Mucosa of descending colon (tissue), 3 donors: ENCODE measurements at regions of chr18 and their contacts with region 1.

Region 1: DNA sequence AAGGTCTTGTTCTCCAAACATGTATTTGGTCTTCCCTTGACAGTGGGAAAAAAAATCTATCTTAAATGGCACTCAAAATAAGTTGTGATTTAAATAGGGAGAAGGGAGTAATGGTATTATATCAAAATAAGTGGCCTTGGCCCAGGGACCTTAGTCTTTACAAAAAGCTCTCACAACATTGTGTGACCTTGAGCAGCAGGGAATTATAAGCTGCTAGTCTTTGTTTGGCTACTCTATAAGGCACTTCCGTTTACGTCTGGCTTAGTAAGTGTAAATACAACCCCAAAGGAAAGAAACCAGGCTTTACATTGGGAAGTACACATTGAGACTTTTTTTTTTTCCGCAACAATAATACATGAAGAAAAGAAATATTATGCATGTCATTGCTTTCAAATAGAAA is 734.0 kb upstream of the LINC00305 start:
- DNase-seq: no peak
- ATAC-seq: no peak
- H3K4me3 ChIP-seq: no peak overlapping the region
- H3K4me1 ChIP-seq: no peaks in the 10 kb centered on the region
- CTCF ChIP-seq: no peak

Region 2: DNA sequence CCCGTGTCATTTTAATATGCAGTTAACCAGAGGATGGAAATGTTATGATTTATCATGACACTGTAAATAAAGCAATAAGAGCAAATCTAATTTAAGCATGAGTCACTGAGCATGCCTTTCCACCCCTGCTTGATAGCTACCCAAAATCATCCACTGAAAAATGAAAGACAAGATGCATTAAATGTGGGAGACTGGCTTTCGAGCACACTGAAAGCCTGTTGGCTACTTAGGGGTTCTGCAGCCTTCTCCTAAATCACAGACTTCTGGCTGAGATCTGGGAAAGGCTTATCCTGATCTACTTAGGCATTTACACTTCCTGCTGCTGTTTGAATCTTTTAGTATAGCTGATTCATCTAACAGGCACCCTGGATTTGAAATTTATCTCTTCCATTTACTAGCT is 89.6 kb after region 1 on chr18:
- intact Hi-C with region 1: loop called in 1 of 2 experiments (anchors 5 kb)
- DNase-seq: no peak
- ATAC-seq: no peak
- H3K4me3 ChIP-seq: no peak overlapping the region
- H3K4me1 ChIP-seq: no peaks in the 10 kb centered on the region
- CTCF ChIP-seq: no peak

Region 3: DNA sequence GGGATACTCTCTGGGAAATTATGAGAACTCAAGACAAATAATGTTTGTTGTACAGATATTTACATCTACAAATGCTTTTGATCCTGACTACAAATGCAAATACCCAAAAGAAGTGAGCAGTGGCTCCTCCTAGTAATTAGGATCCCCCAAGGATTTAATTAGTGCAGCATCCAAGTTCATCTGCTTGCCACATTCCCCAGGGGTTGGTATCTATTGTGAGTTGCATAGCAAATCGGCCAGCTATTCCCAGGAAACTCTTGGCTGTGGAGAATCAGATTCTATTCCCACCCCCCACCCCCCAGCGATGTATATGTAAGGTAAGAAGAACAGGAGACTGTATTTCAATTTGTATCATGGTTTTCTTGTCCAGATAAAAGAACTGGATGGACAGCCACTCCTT is 142.9 kb after region 1 on chr18:
- intact Hi-C with region 1: no loop called
- DNase-seq: no peak
- ATAC-seq: no peak
- H3K4me3 ChIP-seq: no peak overlapping the region
- H3K4me1 ChIP-seq: no peaks in the 10 kb centered on the region
- CTCF ChIP-seq: no peak